Sigmoid colon (tissue), 7 donors: ENCODE measurements at regions of chr11 and their contacts with region 1.

Region 1: GRCh38 chr11:93234602-93235207 is 36.9 kb upstream of the SLC36A4 start:
- DNase-seq: peak; percentile 84
- H3K4me3 ChIP-seq: no peak overlapping the region
- H3K27ac ChIP-seq: no peak overlapping the region
- H3K4me1 ChIP-seq: no peaks in the 10 kb centered on the region
- H3K27me3 ChIP-seq: peaks cover 0 to 6% (median 0%) of the 10 kb centered on the region in 3 donors
- CTCF ChIP-seq: peak; percentile 64 to 82 (median 80)
- EP300 ChIP-seq: no peak
- POLR2A ChIP-seq: no peak

Region 2: GRCh38 chr11:92941676-92942571 is 292.8 kb before region 1 on chr11:
- intact Hi-C with region 1: loop called (anchors 5 kb)
- DNase-seq: no peak
- H3K4me3 ChIP-seq: no peak overlapping the region
- H3K27ac ChIP-seq: no peak overlapping the region
- H3K4me1 ChIP-seq: no peaks in the 10 kb centered on the region
- H3K27me3 ChIP-seq: no peaks in the 10 kb centered on the region
- CTCF ChIP-seq: peak in 3 of 4 experiments; percentile 33 to 46 (median 39)
- EP300 ChIP-seq: no peak
- POLR2A ChIP-seq: no peak

Region 3: DNA sequence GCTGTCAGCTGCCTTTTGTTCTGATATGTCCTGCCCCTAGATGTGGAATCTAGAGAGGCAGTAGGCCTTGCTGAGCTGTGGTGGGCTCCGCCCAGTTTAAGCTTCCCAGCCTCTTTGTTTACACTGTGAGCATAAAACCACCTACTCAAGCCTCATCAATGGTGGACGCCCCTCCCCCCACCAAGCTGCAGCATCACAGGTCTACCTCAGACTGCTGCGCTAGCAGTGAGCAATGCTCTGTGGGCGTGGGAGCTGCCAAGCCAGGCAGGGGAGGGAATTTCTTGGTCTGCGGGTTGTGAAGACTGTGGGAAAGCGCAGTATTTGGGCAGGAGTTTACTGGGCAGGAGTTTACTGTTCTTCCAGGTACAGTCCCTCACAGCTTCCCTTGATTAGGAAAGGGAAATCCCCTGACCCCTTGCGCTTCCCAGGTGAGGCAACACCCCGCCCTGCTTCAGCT is 209.9 kb after region 1 on chr11:
- intact Hi-C with region 1: no loop called
- DNase-seq: no peak
- H3K4me3 ChIP-seq: no peak overlapping the region
- H3K27ac ChIP-seq: no peak overlapping the region
- H3K4me1 ChIP-seq: no peaks in the 10 kb centered on the region
- H3K27me3 ChIP-seq: no peaks in the 10 kb centered on the region
- CTCF ChIP-seq: no peak
- EP300 ChIP-seq: no peak
- POLR2A ChIP-seq: no peak

Region 4: GRCh38 chr11:93543292-93543977 is 308.7 kb after region 1 on chr11 and contains the start of gene SMCO4:
- intact Hi-C with region 1: loop called (anchors 1 kb)
- DNase-seq: peak; percentile 88
- H3K4me3 ChIP-seq: peak within 1 kb of the TSS; percentile 48 to 89 (median 72)
- H3K27ac ChIP-seq: peak within 1 kb of the TSS; percentile 75 to 89 (median 78)
- H3K4me1 ChIP-seq: peaks cover 2 to 14% (median 9%) of the 10 kb centered on the region in 4 donors
- H3K27me3 ChIP-seq: no peaks in the 10 kb centered on the region
- CTCF ChIP-seq: peak; percentile 25 to 63 (median 44)
- EP300 ChIP-seq: no peak
- POLR2A ChIP-seq: no peak
- total RNA-seq, gene SMCO4: 2.4 to 9.6 (median 6.1) TPM

Region 5: GRCh38 chr11:93652161-93652597 is 417.5 kb after region 1 on chr11:
- intact Hi-C with region 1: loop called (anchors 1 kb)
- DNase-seq: no peak
- H3K4me3 ChIP-seq: no peak overlapping the region
- H3K27ac ChIP-seq: no peak overlapping the region
- H3K4me1 ChIP-seq: no peaks in the 10 kb centered on the region
- H3K27me3 ChIP-seq: no peaks in the 10 kb centered on the region
- CTCF ChIP-seq: peak in 3 of 4 experiments; percentile 48 to 80 (median 55)
- EP300 ChIP-seq: no peak
- POLR2A ChIP-seq: no peak